SK-N-SH (cell line): ENCODE measurements at regions of chr4 and their contacts with region 1.

Region 1: GRCh38 chr4:67380154-67380553 is 165.1 kb downstream of the CENPC start:
- DNase-seq: no peak
- H3K4me3 ChIP-seq: no peak overlapping the region
- H3K27ac ChIP-seq: no peak overlapping the region
- H3K4me1 ChIP-seq: no peaks in the 10 kb centered on the region
- H3K27me3 ChIP-seq: peaks cover 7% of the 10 kb centered on the region; the same call in 1 of the 2 replicates
- CTCF ChIP-seq: no peak
- EP300 ChIP-seq: no peak
- RAD21 ChIP-seq: no peak

Region 2: GRCh38 chr4:67393699-67394281 is 13.6 kb after region 1 on chr4:
- CTCF ChIA-PET with region 1: interaction called, 14 read pairs
- POLR2A ChIA-PET with region 1: no interaction called
- DNase-seq: peak; percentile 16
- H3K4me3 ChIP-seq: peak overlapping the region in 1 of 2 experiments; percentile 9; a peak in 1 of 4 replicates
- H3K27ac ChIP-seq: no peak overlapping the region
- H3K4me1 ChIP-seq: no peaks in the 10 kb centered on the region
- H3K27me3 ChIP-seq: peaks cover 8% of the 10 kb centered on the region; the same call in 1 of the 2 replicates
- CTCF ChIP-seq: peak; percentile 92
- EP300 ChIP-seq: no peak
- RAD21 ChIP-seq: peak; percentile 46; the same call in 1 of the 2 replicates